Right lobe of liver (tissue), 6 donors: ENCODE measurements at regions of chr9 and their contacts with region 1.

Region 1: GRCh38 chr9:100028201-100028784 is 70.5 kb downstream of the ERP44 start:
- DNase-seq: peak; percentile 56 to 71 (median 62)
- ATAC-seq: peak; percentile 99
- H3K4me3 ChIP-seq: no peak overlapping the region
- H3K27ac ChIP-seq: no peak overlapping the region
- H3K4me1 ChIP-seq: no peaks in the 10 kb centered on the region
- H3K27me3 ChIP-seq: no peaks in the 10 kb centered on the region
- CTCF ChIP-seq: peak; percentile 85 to 95 (median 94)
- POLR2A ChIP-seq: no peak

Region 2: DNA sequence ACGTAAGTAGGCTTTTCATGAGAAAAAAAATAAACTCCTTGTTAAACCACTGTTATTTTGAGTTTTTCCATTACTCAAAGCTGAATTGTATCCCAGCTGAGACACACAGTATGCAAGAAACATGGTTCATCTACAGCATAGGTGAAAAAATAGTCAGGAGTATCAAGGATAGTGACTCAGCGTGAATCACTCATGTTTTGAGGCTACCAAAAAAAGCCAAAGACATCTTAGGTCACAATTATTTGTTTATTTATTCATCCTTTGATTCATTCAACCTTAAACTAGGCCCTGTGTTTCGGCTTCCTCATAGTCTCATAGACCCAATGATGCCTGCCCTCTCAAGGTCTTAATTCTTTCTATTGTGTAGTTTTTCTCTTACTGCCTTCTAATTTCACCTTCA is 154.8 kb before region 1 on chr9:
- intact Hi-C with region 1: no loop called
- DNase-seq: no peak
- ATAC-seq: no peak
- H3K4me3 ChIP-seq: no peak overlapping the region
- H3K27ac ChIP-seq: no peak overlapping the region
- H3K4me1 ChIP-seq: no peaks in the 10 kb centered on the region
- H3K27me3 ChIP-seq: no peaks in the 10 kb centered on the region
- CTCF ChIP-seq: no peak
- POLR2A ChIP-seq: no peak

Region 3: DNA sequence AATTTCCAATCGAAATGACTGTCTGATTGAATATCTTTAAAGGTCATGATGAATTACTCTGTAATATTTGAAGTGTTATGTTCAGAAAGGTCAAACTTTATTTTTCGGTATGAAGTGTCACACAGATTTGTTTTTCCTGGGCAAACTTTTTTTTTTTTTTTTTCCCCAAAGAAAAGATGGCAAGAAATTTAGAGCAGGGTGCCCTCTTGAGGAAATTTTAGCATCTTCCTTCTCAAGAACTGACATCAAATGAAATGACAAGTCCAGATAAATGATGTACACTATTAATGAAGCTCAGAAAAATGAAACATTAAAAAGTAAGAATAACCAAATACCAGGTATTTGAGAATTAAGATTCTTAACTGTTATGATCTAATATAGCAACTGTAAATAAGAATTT is 194.4 kb after region 1 on chr9:
- intact Hi-C with region 1: loop called in 1 of 2 experiments (anchors 10 kb)
- DNase-seq: no peak
- ATAC-seq: no peak
- H3K4me3 ChIP-seq: no peak overlapping the region
- H3K27ac ChIP-seq: no peak overlapping the region
- H3K4me1 ChIP-seq: no peaks in the 10 kb centered on the region
- H3K27me3 ChIP-seq: no peaks in the 10 kb centered on the region
- CTCF ChIP-seq: peak in 3 of 4 donors; percentile 26 to 33 (median 27)
- POLR2A ChIP-seq: no peak